ENCODE measurements at regions of chr2 and their contacts with region 1.

Region 1: GRCh38 chr2:106085181-106085940 is 108.7 kb downstream of the UXS1 start:
- DNase-seq: peak; percentile 79
- ATAC-seq: peak; percentile 96
- H3K4me3 Mint-ChIP-seq: peak overlapping the region; percentile 14
- H3K27ac Mint-ChIP-seq: peak overlapping the region; percentile 65
- H3K4me1 Mint-ChIP-seq: peaks cover 33% of the 10 kb centered on the region
- H3K27me3 Mint-ChIP-seq: no peaks in the 10 kb centered on the region

Region 2: DNA sequence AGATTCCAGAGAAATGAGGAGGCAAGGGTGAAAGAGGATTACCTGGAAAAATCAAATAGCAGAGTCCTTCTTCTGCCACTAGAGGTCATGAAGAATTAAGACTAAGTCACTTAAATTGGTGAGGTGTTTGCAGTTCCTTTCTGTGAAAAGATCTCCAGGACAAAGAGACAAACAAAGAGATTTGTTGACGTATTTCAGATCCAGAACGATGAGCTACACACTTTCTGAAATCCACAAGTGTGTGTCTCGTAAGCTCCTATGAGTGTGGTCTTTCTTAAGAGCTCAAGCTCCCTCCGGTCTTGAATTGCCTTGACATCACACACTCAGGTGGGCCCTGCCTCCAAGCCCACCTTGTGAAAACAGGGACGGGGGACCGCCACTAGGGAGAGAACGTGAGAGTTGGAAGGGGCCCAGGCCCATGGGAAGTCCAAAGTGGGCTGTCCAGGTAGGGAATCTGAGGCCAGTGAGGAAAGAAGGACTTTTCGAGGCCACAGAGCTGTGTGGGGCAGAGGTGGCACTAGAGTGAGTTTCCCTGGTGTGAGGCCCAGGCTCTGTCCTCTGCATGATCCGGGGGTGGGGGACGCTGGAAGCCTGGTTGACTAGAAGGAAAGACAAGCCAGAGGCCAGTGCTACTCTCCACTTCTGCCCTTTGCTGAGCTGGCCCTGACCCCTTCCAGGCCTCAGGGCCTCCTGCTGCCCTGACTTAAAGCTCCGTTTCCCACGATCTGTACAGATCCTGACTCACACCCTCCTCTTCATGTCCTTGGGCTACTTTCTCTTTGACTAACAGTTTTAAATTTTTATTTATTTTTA is 508.7 kb before region 1 on chr2:
- CTCF ChIA-PET with region 1: interaction called, 10 read pairs
- DNase-seq: no peak
- ATAC-seq: no peak
- H3K4me3 Mint-ChIP-seq: no peak overlapping the region
- H3K27ac Mint-ChIP-seq: peak overlapping the region; percentile 37
- H3K4me1 Mint-ChIP-seq: peaks cover 25% of the 10 kb centered on the region
- H3K27me3 Mint-ChIP-seq: no peaks in the 10 kb centered on the region

Region 3: DNA sequence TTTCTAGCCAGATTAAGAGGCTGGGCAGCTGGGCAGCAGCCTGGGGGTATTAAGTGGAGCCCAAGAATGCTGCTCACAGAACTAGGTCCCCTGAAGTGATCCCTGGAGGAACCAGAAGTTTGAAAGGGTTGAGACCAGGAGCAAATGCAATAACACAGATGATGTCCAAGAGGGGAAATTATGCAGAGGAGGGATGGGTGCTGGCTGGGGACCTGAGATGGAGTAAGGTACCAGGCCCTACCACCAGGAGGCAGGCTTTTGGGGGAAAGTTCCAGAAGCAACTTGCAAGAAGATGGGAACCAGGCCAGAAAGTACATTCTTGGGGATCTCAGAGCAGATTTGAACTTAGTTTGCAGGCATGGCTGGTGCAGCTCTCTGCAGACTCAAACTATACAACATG is 165.5 kb before region 1 on chr2:
- CTCF ChIA-PET with region 1: interaction called, 11 read pairs
- DNase-seq: peak; percentile 59
- ATAC-seq: no peak
- H3K4me3 Mint-ChIP-seq: no peak overlapping the region
- H3K27ac Mint-ChIP-seq: no peak overlapping the region
- H3K4me1 Mint-ChIP-seq: peaks cover 9% of the 10 kb centered on the region
- H3K27me3 Mint-ChIP-seq: no peaks in the 10 kb centered on the region

Region 4: GRCh38 chr2:106098081-106098480 is 12.7 kb after region 1 on chr2:
- CTCF ChIA-PET with region 1: interaction called, 18 read pairs
- DNase-seq: no peak
- ATAC-seq: no peak
- H3K4me3 Mint-ChIP-seq: no peak overlapping the region
- H3K27ac Mint-ChIP-seq: no peak overlapping the region
- H3K4me1 Mint-ChIP-seq: peaks cover 50% of the 10 kb centered on the region
- H3K27me3 Mint-ChIP-seq: no peaks in the 10 kb centered on the region